Activated CD4-positive, alpha-beta T cell treated with anti-CD3 and anti-CD28 coated beads for 36 hours (primary cell): ENCODE measurements at regions of chr3 and their contacts with region 1.

Region 1: DNA sequence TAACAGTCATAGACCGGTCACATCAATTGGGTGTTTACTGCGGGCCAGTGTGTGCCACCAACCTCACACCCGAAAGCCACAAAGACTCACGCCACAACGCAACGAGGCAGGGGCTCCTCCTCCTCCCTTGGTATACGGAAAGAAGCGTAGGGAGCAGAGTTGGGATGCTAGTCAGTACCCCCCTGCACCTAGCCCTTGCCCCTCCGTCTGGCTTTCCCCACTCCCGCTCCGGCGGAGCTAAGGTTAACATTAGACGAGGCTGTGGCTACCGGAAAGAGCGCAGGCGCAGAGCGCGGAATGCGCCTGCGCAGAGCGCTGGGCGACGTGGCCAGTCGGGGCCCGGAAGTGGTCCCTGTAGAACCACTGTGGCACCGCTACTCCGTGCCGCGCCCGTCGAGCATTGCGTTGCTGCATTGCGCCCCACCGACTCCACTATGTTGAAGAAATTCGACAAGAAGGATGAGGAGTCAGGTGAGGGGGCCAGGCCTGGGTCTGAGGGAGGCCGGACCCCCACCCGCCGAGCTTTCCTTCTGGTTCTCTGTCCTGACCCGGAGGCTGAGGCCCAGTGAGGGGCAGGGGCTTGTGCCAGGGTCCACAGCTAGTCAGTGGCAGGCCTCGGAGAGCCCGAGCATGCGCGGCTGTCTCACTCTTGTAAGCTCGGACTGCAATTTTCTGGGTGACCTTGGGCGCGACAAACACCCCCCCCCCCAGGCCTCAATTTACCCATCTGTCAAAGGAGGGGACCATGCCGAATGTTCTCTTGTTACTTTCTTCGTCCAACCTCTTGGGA is at the start of gene COPG1:
- DNase-seq: peak; percentile 91
- ATAC-seq: peak; percentile 92
- H3K4me3 Mint-ChIP-seq: peak within 1 kb of the TSS; percentile 96
- H3K27ac Mint-ChIP-seq: peak within 1 kb of the TSS; percentile 96
- H3K4me1 Mint-ChIP-seq: peaks cover 32% of the 10 kb centered on the region
- H3K27me3 Mint-ChIP-seq: no peaks in the 10 kb centered on the region
- total RNA-seq, gene COPG1: 120 to 142 TPM

Region 2: GRCh38 chr3:128969993-128970739 is 279.3 kb before region 1 on chr3:
- CTCF ChIA-PET with region 1: interaction called, 80 read pairs
- POLR2A ChIA-PET with region 1: no interaction called
- intact Hi-C with region 1: loop called (anchors 1 kb)
- DNase-seq: peak; percentile 80
- ATAC-seq: peak; percentile 74
- H3K4me3 Mint-ChIP-seq: no peak overlapping the region
- H3K27ac Mint-ChIP-seq: no peak overlapping the region
- H3K4me1 Mint-ChIP-seq: peaks cover 3% of the 10 kb centered on the region
- H3K27me3 Mint-ChIP-seq: no peaks in the 10 kb centered on the region

Region 3: DNA sequence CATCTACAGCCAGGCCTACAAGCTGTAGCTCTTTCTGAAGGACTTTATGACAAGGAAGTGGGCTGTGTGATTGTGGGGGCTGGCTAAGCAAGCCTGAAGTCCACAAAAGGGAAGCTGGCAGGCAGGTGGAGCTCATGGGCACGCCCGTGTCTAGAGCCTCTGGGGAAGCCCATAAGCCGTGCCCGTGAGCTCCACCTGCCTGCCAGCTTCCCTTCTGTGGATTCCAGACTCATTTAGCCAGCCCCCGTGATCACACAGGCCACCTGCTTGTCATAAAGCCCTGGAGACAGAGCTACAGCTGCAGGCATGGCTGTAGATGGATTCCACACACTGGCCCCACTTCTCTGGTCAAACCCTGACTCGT is 233.1 kb before region 1 on chr3:
- CTCF ChIA-PET with region 1: interaction called, 12 read pairs
- POLR2A ChIA-PET with region 1: no interaction called
- intact Hi-C with region 1: no loop called
- DNase-seq: peak; percentile 80
- ATAC-seq: peak; percentile 84
- H3K4me3 Mint-ChIP-seq: peak overlapping the region; percentile 63
- H3K27ac Mint-ChIP-seq: peak overlapping the region; percentile 96
- H3K4me1 Mint-ChIP-seq: peaks cover 36% of the 10 kb centered on the region
- H3K27me3 Mint-ChIP-seq: no peaks in the 10 kb centered on the region

Region 4: DNA sequence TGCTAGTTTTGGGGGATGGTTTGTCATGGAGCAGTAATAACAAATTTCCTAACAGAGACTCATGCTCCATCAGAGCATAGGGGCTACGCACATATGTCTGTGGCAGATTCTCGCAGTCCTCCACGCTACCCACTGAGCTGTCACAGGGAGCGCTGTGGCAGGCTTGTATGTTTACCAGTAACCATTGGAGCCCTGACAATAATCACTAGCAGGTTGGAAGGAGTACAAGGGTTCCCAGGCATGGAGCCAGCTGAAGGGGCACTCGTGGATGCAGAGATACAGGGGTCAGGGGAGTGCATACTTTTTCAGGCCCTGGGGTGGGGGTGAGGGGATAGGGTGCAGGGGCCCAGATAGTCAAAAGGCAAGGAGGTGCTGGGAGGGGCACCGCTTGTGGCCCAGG is 196.8 kb before region 1 on chr3:
- CTCF ChIA-PET with region 1: interaction called, 97 read pairs
- POLR2A ChIA-PET with region 1: no interaction called
- intact Hi-C with region 1: loop called (anchors 1 kb)
- DNase-seq: no peak
- ATAC-seq: no peak
- H3K4me3 Mint-ChIP-seq: no peak overlapping the region
- H3K27ac Mint-ChIP-seq: no peak overlapping the region
- H3K4me1 Mint-ChIP-seq: peaks cover 10% of the 10 kb centered on the region
- H3K27me3 Mint-ChIP-seq: no peaks in the 10 kb centered on the region

Region 5: DNA sequence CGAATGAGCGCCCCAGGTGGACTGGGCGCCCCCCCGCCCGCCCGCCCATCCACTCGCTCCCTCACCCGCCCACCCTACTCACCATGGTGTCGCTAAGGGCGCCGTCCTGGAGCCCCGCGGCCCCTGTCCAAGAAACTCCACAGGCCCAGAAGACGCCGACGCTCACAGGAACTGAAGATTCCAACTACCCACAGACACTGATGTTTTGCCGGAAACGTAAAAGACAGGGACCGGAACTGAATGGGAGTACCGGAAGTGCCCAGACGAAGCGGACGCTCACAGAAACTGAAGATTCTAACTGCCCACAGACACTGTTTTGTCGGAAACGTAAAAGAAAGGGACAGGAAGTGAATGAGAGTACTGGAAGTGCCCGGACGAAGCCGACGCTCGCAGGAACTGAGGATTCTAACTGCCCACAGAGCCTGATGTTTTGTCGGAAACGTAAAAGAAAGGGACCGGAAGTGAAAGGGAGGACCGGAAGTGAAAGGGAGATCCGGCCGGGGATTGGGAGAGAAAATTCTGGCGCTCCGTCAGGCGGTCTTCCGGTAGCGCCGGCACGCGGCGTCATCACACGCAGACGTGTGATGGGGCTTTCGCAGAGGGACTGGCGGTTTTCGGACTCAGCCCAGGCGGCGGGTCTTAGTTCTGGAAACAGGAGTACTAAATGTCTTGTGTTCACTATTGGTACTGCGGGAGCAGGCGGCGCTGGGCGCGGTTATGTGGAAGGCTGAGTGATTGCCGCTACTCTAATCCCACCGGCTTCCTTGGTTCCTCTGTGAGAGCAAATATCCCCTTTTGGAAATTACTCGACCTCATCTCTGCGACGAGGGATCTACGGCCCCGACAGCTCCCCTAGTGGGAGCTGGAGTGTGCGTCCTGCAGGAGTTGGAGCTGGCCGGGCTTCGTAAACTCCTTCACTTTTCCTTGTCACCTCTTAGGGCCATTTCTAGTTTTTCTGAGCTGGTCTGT is 88.3 kb before region 1 on chr3 and contains the start of gene ISY1:
- CTCF ChIA-PET with region 1: interaction called, 45 read pairs
- POLR2A ChIA-PET with region 1: no interaction called
- intact Hi-C with region 1: loop called (anchors 1 kb)
- DNase-seq: peak; percentile 93
- ATAC-seq: peak; percentile 81
- H3K4me3 Mint-ChIP-seq: peak within 1 kb of the TSS; percentile 93
- H3K27ac Mint-ChIP-seq: peak within 1 kb of the TSS; percentile 98
- H3K4me1 Mint-ChIP-seq: peaks cover 30% of the 10 kb centered on the region
- H3K27me3 Mint-ChIP-seq: no peaks in the 10 kb centered on the region
- total RNA-seq, gene ISY1: 44.9 to 65.5 TPM

Region 6: GRCh38 chr3:129224984-129225393 is 24.5 kb before region 1 on chr3:
- CTCF ChIA-PET with region 1: interaction called, 33 read pairs
- POLR2A ChIA-PET with region 1: no interaction called
- intact Hi-C with region 1: no loop called
- DNase-seq: peak; percentile 32
- ATAC-seq: peak; percentile 74
- H3K4me3 Mint-ChIP-seq: no peak overlapping the region
- H3K27ac Mint-ChIP-seq: peak overlapping the region; percentile 38
- H3K4me1 Mint-ChIP-seq: peaks cover 13% of the 10 kb centered on the region
- H3K27me3 Mint-ChIP-seq: no peaks in the 10 kb centered on the region

Region 7: GRCh38 chr3:129278439-129278970 is 29.0 kb after region 1 on chr3 and contains the start of gene HMCES:
- CTCF ChIA-PET with region 1: interaction called, 5 read pairs
- POLR2A ChIA-PET with region 1: no interaction called
- intact Hi-C with region 1: loop called in 1 of 2 experiments (anchors 1 kb)
- DNase-seq: peak; percentile 98
- ATAC-seq: peak; percentile 84
- H3K4me3 Mint-ChIP-seq: peak within 1 kb of the TSS; percentile 89
- H3K27ac Mint-ChIP-seq: peak within 1 kb of the TSS; percentile 95
- H3K4me1 Mint-ChIP-seq: peaks cover 55% of the 10 kb centered on the region
- H3K27me3 Mint-ChIP-seq: no peaks in the 10 kb centered on the region
- total RNA-seq, gene HMCES: 43.1 to 56.7 TPM

Region 8: GRCh38 chr3:129616713-129617112 is 367.2 kb after region 1 on chr3:
- CTCF ChIA-PET with region 1: no interaction called
- POLR2A ChIA-PET with region 1: no interaction called
- intact Hi-C with region 1: no loop called
- DNase-seq: no peak
- ATAC-seq: no peak
- H3K4me3 Mint-ChIP-seq: no peak overlapping the region
- H3K27ac Mint-ChIP-seq: no peak overlapping the region
- H3K4me1 Mint-ChIP-seq: no peaks in the 10 kb centered on the region
- H3K27me3 Mint-ChIP-seq: no peaks in the 10 kb centered on the region